PC-3 (cell line): ENCODE measurements at regions of chr19 and their contacts with region 1.

Region 1: GRCh38 chr19:52981329-52981728 is 18.6 kb upstream of the ZNF816 start:
- DNase-seq: no peak
- ATAC-seq: no peak
- H3K4me3 ChIP-seq: no peak overlapping the region
- H3K27ac ChIP-seq: no peak overlapping the region
- H3K4me1 ChIP-seq: no peaks in the 10 kb centered on the region
- H3K27me3 ChIP-seq: no peaks in the 10 kb centered on the region
- CTCF ChIP-seq: no peak

Region 2: GRCh38 chr19:52948025-52948770 is 33.1 kb before region 1 on chr19:
- CTCF ChIA-PET with region 1: no interaction called
- POLR2A ChIA-PET with region 1: interaction called, 11 read pairs
- intact Hi-C with region 1: no loop called
- DNase-seq: no peak
- ATAC-seq: no peak
- H3K4me3 ChIP-seq: no peak overlapping the region; the same call in 1 of the 2 replicates
- H3K27ac ChIP-seq: no peak overlapping the region
- H3K4me1 ChIP-seq: peaks cover 28% of the 10 kb centered on the region
- H3K27me3 ChIP-seq: no peaks in the 10 kb centered on the region
- CTCF ChIP-seq: no peak

Region 3: GRCh38 chr19:53037101-53038097 is 56.1 kb after region 1 on chr19:
- CTCF ChIA-PET with region 1: no interaction called
- POLR2A ChIA-PET with region 1: no interaction called
- intact Hi-C with region 1: no loop called
- DNase-seq: no peak
- ATAC-seq: no peak
- H3K4me3 ChIP-seq: no peak overlapping the region
- H3K27ac ChIP-seq: no peak overlapping the region
- H3K4me1 ChIP-seq: no peaks in the 10 kb centered on the region
- H3K27me3 ChIP-seq: no peaks in the 10 kb centered on the region
- CTCF ChIP-seq: no peak